Endothelial cell of umbilical vein (primary cell): ENCODE measurements at regions of chr22 and their contacts with region 1.

Region 1: GRCh38 chr22:26679003-26679629 is 21.7 kb downstream of the MIAT start:
- DNase-seq: peak; percentile 84
- H3K4me3 ChIP-seq: no peak overlapping the region
- H3K27ac ChIP-seq: no peak overlapping the region
- H3K4me1 ChIP-seq: peaks cover 13% of the 10 kb centered on the region
- H3K27me3 ChIP-seq: no peaks in the 10 kb centered on the region
- CTCF ChIP-seq: peak; percentile 93 to 96
- POLR2A ChIP-seq: no peak

Region 2: DNA sequence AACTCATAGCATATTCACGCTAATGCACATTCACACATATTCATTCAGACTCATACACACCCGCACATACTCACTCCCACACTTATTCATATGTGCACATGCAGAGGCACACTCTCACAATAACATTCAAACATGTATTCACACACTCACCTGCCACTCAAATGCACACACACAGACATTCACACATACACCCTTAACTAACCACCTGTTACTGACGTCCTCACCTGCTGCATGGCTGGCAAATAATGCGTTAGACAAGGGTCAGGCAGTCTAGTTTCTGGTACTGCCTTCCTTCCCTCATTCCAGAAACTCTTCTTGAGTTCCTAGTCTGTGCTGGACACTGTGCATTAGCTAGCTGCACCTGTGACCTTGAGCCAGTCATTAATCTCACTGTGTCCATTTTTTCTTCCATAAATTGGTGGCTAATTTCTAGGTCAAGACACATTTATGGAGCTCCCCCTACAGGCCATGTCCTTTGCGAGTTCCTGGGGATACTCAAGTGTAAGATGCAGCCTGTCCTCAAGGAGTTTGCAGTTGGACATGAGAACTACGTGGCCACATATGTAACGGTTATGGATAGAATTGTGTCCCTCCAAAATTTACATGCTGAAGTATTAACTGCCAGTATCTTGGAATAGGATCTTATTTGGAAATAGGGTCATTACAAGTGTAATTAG is 544.3 kb before region 1 on chr22:
- CTCF ChIA-PET with region 1: no interaction called
- POLR2A ChIA-PET with region 1: no interaction called
- dilution Hi-C with region 1: no loop called
- intact Hi-C with region 1: no loop called
- DNase-seq: no peak
- H3K4me3 ChIP-seq: no peak overlapping the region
- H3K27ac ChIP-seq: no peak overlapping the region
- H3K4me1 ChIP-seq: no peaks in the 10 kb centered on the region
- H3K27me3 ChIP-seq: no peaks in the 10 kb centered on the region
- CTCF ChIP-seq: no peak
- POLR2A ChIP-seq: no peak

Region 3: DNA sequence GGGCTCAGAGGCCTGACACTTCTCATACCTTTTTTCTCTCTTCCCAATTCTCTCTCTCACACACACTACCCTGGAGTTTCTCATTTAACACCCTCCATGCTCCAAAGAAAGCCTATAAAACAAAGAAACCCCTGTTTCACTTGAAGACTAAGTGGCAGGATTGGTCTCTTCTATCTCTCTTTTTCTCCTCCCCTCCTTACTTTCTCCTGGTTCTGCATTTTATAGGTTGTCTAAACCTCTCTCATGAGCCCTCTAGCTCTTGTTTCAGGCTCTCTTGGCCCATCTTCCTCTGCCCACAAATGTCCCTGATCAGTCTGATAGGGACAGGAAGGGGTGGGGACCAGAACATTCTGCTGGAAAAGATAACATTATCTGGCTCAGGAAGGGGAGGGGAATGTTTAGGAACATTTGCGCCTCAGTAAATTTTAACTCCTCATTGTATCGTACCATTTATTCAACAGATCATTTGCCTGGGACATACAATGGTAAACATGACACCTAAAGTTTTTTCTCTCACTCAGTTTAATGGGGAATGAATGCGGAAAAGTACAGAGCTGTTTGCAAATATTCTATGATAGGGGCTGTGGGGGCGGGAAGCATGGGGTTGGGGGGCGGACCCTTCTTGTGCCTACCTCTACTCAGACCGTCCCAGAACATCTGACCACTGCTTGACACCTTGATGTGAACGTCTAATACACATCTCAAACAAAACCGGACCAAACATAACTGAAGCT is 46.5 kb before region 1 on chr22:
- CTCF ChIA-PET with region 1: no interaction called
- POLR2A ChIA-PET with region 1: no interaction called
- dilution Hi-C with region 1: no loop called
- intact Hi-C with region 1: no loop called
- DNase-seq: peak; percentile 60
- H3K4me3 ChIP-seq: no peak overlapping the region
- H3K27ac ChIP-seq: no peak overlapping the region
- H3K4me1 ChIP-seq: peaks cover 8% of the 10 kb centered on the region
- H3K27me3 ChIP-seq: peaks cover 0 to 3% of the 10 kb centered on the region in 2 experiments
- CTCF ChIP-seq: no peak
- POLR2A ChIP-seq: peak; percentile 20

Region 4: DNA sequence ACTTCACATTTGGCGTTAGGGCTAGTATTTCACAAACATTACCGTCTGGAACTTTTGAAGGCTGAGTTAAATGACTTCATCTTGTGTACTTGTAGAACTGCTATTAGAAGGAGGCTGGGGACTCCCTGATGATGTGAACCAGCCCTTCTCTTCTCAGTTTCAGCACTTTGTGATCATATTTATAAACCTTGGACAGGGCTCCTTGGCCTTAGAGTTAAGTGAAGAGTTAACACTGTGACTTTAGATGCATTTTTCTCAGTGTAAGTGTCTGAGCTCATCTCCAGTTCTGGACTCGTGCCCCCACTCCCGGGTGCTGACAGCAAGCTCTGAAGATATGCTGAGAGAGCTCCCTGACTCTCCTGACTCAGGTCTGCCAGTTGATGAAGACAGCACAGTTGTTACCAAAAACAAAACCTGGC is 13.3 kb before region 1 on chr22:
- CTCF ChIA-PET with region 1: interaction called, 10 read pairs
- POLR2A ChIA-PET with region 1: no interaction called
- dilution Hi-C with region 1: no loop called
- intact Hi-C with region 1: no loop called
- DNase-seq: no peak
- H3K4me3 ChIP-seq: no peak overlapping the region
- H3K27ac ChIP-seq: no peak overlapping the region
- H3K4me1 ChIP-seq: no peaks in the 10 kb centered on the region
- H3K27me3 ChIP-seq: peaks cover 6 to 12% of the 10 kb centered on the region in 2 experiments
- CTCF ChIP-seq: no peak
- POLR2A ChIP-seq: no peak

Region 5: DNA sequence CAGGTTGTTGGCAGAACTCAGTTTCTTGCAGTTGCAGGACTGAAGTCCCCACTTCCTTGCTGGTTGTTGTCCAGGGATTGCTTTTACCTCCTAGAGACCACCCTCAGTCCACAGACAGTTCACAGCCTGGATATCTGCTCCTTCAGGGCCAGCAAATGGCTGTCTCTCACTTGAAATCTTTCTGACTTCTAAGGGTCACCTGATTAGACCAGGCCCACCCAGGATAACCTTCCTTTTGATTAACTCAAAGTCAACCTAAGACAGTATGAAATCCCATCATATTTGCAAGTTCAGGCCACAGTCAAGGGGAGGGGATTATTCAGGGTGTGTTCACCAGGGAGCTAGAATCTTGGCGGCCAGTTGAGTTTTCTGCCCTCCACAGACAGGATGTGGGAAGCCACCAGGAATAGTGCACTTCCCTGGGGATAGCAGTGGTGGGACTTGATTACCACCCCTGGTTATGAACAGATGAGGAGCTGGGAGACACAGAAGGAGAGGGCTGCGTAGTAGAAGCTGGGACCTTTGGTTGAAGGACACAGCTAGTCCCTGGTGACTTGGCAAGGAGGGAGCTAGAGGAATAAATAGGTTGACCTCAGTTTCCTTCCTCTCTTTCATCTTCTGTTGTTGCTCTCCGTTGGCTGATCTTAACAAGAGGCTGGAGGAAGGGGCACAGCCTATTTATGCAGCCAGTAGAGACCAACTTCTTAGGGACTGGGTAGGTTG is 11.7 kb after region 1 on chr22:
- CTCF ChIA-PET with region 1: interaction called, 6 read pairs
- POLR2A ChIA-PET with region 1: no interaction called
- dilution Hi-C with region 1: no loop called
- intact Hi-C with region 1: loop called (anchors 1 kb)
- DNase-seq: peak; percentile 55
- H3K4me3 ChIP-seq: no peak overlapping the region
- H3K27ac ChIP-seq: no peak overlapping the region
- H3K4me1 ChIP-seq: peaks cover 10% of the 10 kb centered on the region
- H3K27me3 ChIP-seq: no peaks in the 10 kb centered on the region
- CTCF ChIP-seq: no peak
- POLR2A ChIP-seq: no peak

Region 6: GRCh38 chr22:26751217-26751616 is 72.1 kb after region 1 on chr22:
- CTCF ChIA-PET with region 1: interaction called, 33 read pairs
- POLR2A ChIA-PET with region 1: no interaction called
- dilution Hi-C with region 1: no loop called
- intact Hi-C with region 1: loop called (anchors 1 kb)
- DNase-seq: peak; percentile 84
- H3K4me3 ChIP-seq: no peak overlapping the region
- H3K27ac ChIP-seq: peak overlapping the region; percentile 49
- H3K4me1 ChIP-seq: peaks cover 12% of the 10 kb centered on the region
- H3K27me3 ChIP-seq: no peaks in the 10 kb centered on the region
- CTCF ChIP-seq: no peak
- POLR2A ChIP-seq: no peak

Region 7: GRCh38 chr22:26756675-26757293 is 77.7 kb after region 1 on chr22:
- CTCF ChIA-PET with region 1: interaction called, 33 read pairs
- POLR2A ChIA-PET with region 1: no interaction called
- dilution Hi-C with region 1: no loop called
- intact Hi-C with region 1: loop called (anchors 1 kb)
- DNase-seq: peak; percentile 46
- H3K4me3 ChIP-seq: peak overlapping the region in 2 of 3 experiments; percentile 13 to 29
- H3K27ac ChIP-seq: no peak overlapping the region
- H3K4me1 ChIP-seq: peaks cover 5% of the 10 kb centered on the region
- H3K27me3 ChIP-seq: no peaks in the 10 kb centered on the region
- CTCF ChIP-seq: peak; percentile 75 to 88
- POLR2A ChIP-seq: no peak

Region 8: DNA sequence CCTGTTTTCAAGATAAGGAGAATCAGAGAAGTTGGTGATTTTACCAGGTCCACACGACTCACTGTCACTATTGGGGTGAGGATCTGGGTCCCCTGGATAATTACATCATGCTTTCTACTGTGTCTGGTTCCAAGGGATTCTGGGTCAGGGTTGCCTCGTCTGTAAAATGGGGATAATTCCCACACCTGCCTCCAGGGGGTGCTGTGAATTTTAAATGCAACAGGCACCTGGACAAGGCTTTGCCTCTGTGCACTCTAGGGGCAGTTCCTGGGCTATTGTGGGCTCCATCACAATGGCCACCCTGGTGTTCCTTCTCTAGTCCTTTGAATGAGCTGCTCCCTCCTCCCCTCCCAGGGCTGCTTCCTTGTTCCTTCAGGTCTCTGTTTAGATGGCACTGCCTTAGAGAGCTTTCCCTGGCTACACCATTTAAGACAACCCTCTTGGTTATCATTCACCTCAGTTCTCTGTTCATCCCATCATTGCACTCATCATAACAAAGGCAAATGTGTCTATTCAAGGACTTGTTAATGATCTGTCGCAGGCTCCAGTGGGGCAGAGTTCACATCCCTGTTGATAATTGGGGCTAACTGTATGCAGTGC is 156.9 kb after region 1 on chr22:
- CTCF ChIA-PET with region 1: no interaction called
- POLR2A ChIA-PET with region 1: no interaction called
- dilution Hi-C with region 1: no loop called
- intact Hi-C with region 1: loop called (anchors 5 kb)
- DNase-seq: peak; percentile 42
- H3K4me3 ChIP-seq: no peak overlapping the region
- H3K27ac ChIP-seq: no peak overlapping the region
- H3K4me1 ChIP-seq: no peaks in the 10 kb centered on the region
- H3K27me3 ChIP-seq: no peaks in the 10 kb centered on the region
- CTCF ChIP-seq: peak; percentile 51 to 71
- POLR2A ChIP-seq: no peak

Region 9: GRCh38 chr22:27331526-27332281 is 652.6 kb after region 1 on chr22:
- CTCF ChIA-PET with region 1: interaction called, 14 read pairs
- POLR2A ChIA-PET with region 1: no interaction called
- dilution Hi-C with region 1: no loop called
- intact Hi-C with region 1: loop called (anchors 1 kb)
- DNase-seq: peak; percentile 62
- H3K4me3 ChIP-seq: no peak overlapping the region
- H3K27ac ChIP-seq: no peak overlapping the region
- H3K4me1 ChIP-seq: no peaks in the 10 kb centered on the region
- H3K27me3 ChIP-seq: peaks cover 5 to 6% of the 10 kb centered on the region in 2 experiments
- CTCF ChIP-seq: peak; percentile 27 to 76
- POLR2A ChIP-seq: no peak